Tibial artery (tissue), 4 donors: ENCODE measurements at regions of chr14 and their contacts with region 1.

Region 1: GRCh38 chr14:59811815-59812214 is 58.8 kb downstream of the RTN1 start:
- DNase-seq: no peak
- H3K4me3 ChIP-seq: no peak overlapping the region
- H3K27ac ChIP-seq: no peak overlapping the region
- H3K4me1 ChIP-seq: peaks cover 0 to 17% (median 0%) of the 10 kb centered on the region in 4 donors
- H3K27me3 ChIP-seq: no peaks in the 10 kb centered on the region
- CTCF ChIP-seq: no peak

Region 2: DNA sequence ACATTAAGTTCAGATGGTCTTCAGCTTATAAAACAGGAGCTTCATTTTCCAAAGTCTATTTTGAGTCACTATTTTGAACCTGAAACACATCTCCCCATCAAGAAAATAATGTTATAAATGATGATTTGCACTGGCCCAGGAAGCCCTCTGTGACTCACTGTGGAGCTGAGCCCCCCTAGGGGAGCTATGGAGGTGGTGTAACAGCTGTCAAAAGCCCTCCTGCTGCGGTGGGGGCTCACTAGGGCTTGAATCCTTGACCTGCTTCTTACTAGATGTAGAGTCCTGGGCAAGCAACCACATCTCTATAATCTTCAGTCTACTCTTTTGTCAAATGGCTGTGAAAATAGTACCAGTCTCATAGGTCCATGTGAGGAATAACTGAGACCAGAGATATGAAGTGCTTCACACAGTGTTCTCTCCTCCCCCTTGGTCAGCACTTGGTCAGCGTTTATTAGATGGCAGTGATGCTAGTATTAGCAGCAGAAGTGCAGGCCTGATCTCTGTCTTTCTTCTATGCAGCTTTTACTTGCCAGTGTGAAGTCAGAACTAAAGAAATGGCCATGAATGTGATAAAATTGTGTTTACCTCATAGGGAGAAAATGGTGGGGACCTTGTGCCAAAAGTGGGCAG is 24.7 kb before region 1 on chr14:
- intact Hi-C with region 1: loop called (anchors 2 kb)
- DNase-seq: no peak
- H3K4me3 ChIP-seq: no peak overlapping the region
- H3K27ac ChIP-seq: peak overlapping the region in 1 of 2 donors; percentile 13
- H3K4me1 ChIP-seq: peaks cover 0 to 41% (median 7%) of the 10 kb centered on the region in 4 donors
- H3K27me3 ChIP-seq: no peaks in the 10 kb centered on the region
- CTCF ChIP-seq: no peak